ENCODE measurements at regions of chr5 and their contacts with region 1.

Region 1: GRCh38 chr5:171907725-171908343 is 98.6 kb downstream of the FBXW11 start:
- DNase-seq: peak; percentile 65
- H3K4me3 ChIP-seq: no peak overlapping the region
- H3K27ac ChIP-seq: no peak overlapping the region
- H3K4me1 ChIP-seq: no peaks in the 10 kb centered on the region
- H3K27me3 ChIP-seq: no peaks in the 10 kb centered on the region
- CTCF ChIP-seq: peak; percentile 52 to 58
- POLR2A ChIP-seq: no peak

Region 2: DNA sequence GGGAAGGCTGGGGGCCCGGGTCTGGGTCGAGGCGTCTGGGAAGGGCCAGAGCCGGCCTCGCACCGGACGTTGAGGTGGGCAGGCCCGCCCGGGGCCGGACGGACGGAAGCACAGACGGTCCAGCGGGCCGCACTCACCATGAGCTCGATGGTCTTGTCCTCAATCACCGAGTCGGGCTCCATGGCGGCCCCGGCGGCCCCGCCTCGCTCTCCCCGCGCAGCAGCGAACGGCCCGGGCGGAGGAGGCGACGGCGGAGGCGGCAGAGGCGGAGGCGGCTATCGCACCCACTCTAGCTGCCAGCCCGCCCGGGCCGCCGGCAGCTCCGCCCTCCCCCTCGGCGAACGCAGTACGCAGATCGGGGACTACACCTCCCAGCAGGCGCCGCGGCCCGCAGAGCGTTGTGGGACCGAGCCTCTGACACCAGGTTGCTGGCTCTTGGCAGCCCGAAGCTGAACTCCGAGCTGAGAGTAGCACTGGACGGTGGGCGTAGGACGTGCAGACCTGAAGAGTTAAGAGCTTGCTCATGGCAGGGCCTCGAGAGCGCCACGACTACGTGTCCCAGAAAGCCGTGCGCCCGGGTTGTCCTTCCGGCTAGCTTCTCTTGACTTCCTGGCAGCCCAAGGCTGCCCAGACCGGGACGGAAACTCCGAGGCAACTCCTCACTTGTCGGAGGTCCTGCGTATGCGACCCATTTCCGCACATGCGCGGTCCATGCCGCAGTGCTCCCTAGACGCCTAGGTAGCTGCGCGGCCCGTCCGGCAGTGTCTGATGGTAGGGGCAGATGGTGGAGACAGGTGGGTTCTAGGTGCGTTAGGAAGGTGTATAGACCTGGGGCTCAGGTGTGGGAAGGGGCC is 98.7 kb after region 1 on chr5 and contains the start of gene FBXW11:
- CTCF ChIA-PET with region 1: interaction called, 112 read pairs
- POLR2A ChIA-PET with region 1: interaction called, 3 read pairs
- dilution Hi-C with region 1: no loop called
- intact Hi-C with region 1: loop called (anchors 1 kb)
- DNase-seq: peak; percentile 95
- H3K4me3 ChIP-seq: peak within 1 kb of the TSS; percentile 66 to 98 (median 88)
- H3K27ac ChIP-seq: peak within 1 kb of the TSS; percentile 78
- H3K4me1 ChIP-seq: peaks cover 44% of the 10 kb centered on the region
- H3K27me3 ChIP-seq: no peaks in the 10 kb centered on the region
- CTCF ChIP-seq: no peak
- POLR2A ChIP-seq: peak; percentile 96
- total RNA-seq, gene FBXW11: 42.3 and 44.7 TPM in 2 replicates

Region 3: DNA sequence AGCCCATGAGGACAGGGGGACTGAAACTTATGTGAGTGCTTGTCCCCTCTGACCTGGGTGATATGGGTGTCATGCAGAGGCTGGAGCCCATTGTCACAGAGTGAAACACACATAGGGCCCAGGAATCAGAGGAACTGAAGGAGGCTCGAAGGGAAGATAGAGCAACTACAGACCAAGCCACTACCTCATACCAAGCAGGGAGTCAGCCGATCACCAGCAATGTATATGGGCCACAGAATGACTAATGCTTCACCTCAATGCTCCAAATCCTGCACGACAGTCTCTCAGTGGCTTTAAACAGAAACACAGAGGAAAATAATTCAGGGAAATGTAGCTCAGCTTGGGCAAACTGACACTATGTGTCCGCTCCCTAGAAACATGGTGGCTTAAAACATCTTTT is 107.5 kb after region 1 on chr5:
- CTCF ChIA-PET with region 1: interaction called, 12 read pairs
- POLR2A ChIA-PET with region 1: no interaction called
- dilution Hi-C with region 1: no loop called
- intact Hi-C with region 1: no loop called
- DNase-seq: no peak
- H3K4me3 ChIP-seq: no peak overlapping the region
- H3K27ac ChIP-seq: no peak overlapping the region
- H3K4me1 ChIP-seq: no peaks in the 10 kb centered on the region
- H3K27me3 ChIP-seq: peaks cover 0 to 3% of the 10 kb centered on the region in 2 experiments
- CTCF ChIP-seq: no peak
- POLR2A ChIP-seq: no peak

Region 4: DNA sequence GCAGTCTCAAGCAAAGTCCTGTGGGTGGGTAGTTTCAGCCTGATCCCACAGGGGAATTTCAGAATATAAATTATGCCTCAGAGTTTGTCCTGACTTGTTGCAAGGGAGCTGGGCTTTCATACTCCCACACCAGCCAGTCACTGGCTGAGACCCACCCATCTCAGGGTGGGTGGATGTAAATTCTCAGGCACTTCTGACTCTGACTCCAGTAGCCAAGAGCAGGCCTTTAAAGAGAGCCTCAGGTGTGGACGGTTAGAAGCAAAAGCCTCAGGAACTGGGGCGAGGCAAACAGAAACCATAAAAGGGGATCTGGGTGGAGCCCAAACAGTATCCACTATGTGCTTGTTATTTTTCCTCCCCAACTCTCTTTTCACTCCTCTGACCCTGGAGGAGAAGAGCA is 127.2 kb after region 1 on chr5:
- CTCF ChIA-PET with region 1: interaction called, 122 read pairs
- POLR2A ChIA-PET with region 1: interaction called, 7 read pairs
- dilution Hi-C with region 1: no loop called
- intact Hi-C with region 1: loop called (anchors 1 kb)
- DNase-seq: no peak
- H3K4me3 ChIP-seq: no peak overlapping the region
- H3K27ac ChIP-seq: no peak overlapping the region
- H3K4me1 ChIP-seq: no peaks in the 10 kb centered on the region
- H3K27me3 ChIP-seq: peaks cover 5 to 12% of the 10 kb centered on the region in 2 experiments
- CTCF ChIP-seq: no peak
- POLR2A ChIP-seq: no peak

Region 5: GRCh38 chr5:172283020-172283861 is 375.4 kb after region 1 on chr5 and contains the start of gene UBTD2:
- CTCF ChIA-PET with region 1: interaction called, 22 read pairs
- POLR2A ChIA-PET with region 1: no interaction called
- dilution Hi-C with region 1: no loop called
- intact Hi-C with region 1: loop called (anchors 1 kb)
- DNase-seq: peak; percentile 79
- H3K4me3 ChIP-seq: peak within 1 kb of the TSS; percentile 73 to 93 (median 92)
- H3K27ac ChIP-seq: peak within 1 kb of the TSS; percentile 82
- H3K4me1 ChIP-seq: peaks cover 21% of the 10 kb centered on the region
- H3K27me3 ChIP-seq: no peaks in the 10 kb centered on the region
- CTCF ChIP-seq: peak; percentile 35 to 65
- POLR2A ChIP-seq: peak; percentile 84
- total RNA-seq, gene UBTD2: 21.6 and 22.6 TPM in 2 replicates

Region 6: DNA sequence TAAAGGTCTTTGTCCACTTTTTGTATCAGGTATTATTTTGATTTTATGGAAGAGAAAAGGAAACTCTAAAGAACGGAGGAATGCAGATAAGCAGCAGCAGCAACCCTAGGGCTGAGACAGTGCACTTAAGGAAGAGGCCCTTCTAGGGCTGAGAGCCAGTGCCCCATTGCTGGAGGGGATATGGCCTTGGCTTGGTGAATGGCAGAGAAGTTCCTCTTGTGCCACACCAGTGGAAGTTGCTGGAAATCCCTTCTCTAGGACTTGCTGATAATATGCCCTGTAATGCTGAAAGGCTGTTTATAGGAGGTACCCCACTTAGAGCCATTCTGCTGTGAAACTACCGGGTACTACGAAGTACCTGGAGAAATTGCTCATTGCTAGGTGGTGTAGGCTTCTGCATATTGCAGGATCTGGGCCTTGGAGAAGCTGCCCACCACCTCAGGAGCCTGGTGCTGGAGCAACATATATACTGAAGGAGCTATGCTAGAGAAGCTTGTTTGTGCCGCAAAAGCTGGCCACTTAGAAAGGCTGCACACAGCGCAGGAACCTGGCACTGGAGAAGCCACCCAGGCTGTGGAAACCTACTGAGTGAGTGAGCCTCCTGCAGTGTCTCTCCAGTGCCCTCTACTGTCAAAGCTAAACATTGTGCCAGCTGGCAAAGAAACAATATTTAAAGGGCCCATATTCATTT is 385.4 kb after region 1 on chr5:
- CTCF ChIA-PET with region 1: interaction called, 27 read pairs
- POLR2A ChIA-PET with region 1: no interaction called
- dilution Hi-C with region 1: no loop called
- intact Hi-C with region 1: loop called (anchors 1 kb)
- DNase-seq: peak; percentile 63
- H3K4me3 ChIP-seq: no peak overlapping the region
- H3K27ac ChIP-seq: no peak overlapping the region
- H3K4me1 ChIP-seq: no peaks in the 10 kb centered on the region
- H3K27me3 ChIP-seq: peaks cover 2 to 7% of the 10 kb centered on the region in 2 experiments
- CTCF ChIP-seq: peak; percentile 81 to 87
- POLR2A ChIP-seq: no peak